ENCODE measurements at regions of chr3 and their contacts with region 1.

Region 1: DNA sequence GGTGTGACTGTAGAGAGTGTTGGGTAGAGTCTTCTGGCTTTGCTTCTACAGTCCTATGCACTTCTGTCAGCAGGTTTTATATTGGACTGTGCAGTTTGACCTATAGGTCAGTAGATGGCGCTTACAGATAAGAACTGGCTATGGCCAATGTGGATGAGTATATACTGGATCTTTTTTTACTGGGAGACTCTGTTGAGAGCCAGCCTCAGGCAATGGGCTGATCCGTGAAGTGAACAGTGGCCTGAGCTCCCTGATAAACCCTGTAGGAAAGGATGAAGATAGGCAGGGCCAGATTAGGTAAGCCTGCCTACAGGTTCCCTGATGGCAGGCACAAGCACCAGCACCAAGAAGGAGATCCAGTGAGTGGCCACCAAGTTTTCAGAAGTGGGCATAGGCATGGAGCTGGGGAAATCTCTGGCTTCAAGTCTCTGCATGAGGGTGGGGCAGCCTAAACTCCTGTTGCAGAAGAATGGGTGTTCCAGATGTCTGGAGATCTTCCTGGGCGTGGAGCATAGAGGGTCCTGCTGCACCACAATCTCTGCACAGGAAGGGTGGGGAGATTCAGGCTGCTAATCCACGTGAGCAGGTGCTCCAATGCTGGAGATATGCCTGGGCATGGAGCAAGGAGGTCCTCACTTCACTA is 326.0 kb upstream of the SGO1 start:
- DNase-seq: peak; percentile 20
- CTCF ChIP-seq: peak; percentile 76

Region 2: GRCh38 chr3:21484057-21484827 is 972.3 kb after region 1 on chr3:
- in situ Hi-C with region 1: loop called (anchors 10 kb)
- DNase-seq: peak; percentile 2
- CTCF ChIP-seq: peak; percentile 67

Measured in GM13977 (cell line).